AG04449 (cell line): ENCODE measurements at regions of chr3 and their contacts with region 1.

Region 1: DNA sequence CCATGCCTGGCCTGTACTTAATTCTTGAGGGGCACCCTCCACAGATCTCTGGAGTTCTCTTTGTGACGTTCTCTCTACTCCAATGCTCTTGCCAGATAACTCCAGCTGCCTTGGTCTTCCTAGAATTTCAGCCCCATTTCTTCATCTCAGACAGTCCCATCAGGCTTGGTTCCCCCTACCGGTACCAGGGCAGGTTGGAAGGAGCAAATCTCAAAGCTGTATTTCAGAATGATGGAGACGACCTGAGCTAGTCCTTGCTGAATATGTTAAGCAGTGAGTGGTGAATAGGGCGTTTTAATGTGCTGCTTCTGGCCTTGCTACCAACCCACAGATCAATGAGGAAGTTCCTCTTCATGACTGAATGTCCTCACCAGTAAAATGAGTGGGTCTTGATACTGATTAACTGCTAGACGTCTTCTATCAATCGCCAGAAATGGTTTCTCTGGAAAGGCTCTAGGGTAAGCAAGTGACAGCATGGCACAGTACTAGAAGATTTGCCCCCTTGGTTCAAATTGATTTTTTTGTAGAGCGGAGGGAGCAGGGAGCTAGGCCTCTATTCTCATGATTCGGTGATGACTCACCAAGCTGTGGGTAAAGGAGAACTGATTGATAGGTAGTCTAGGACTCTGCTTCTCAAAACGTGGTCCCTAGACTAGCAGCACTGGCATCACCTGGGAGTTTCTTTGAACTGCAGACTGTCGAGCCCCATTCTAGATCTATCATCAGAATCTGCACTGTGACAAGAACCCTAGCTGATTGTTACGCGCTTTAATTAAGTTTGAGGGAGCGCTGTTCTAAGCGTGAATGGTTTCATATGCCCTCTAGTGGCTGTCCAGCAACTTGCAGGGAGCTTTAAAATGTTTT is 67.8 kb downstream of the UBP1 start:
- DNase-seq: no peak
- H3K4me3 ChIP-seq: no peak overlapping the region
- CTCF ChIP-seq: peak; percentile 79

Region 2: GRCh38 chr3:33105341-33105948 is 267.0 kb before region 1 on chr3:
- CTCF ChIA-PET with region 1: interaction called, 10 read pairs
- POLR2A ChIA-PET with region 1: no interaction called
- DNase-seq: no peak
- H3K4me3 ChIP-seq: no peak overlapping the region
- CTCF ChIP-seq: no peak

Region 3: GRCh38 chr3:33131331-33132018 is 241.0 kb before region 1 on chr3:
- CTCF ChIA-PET with region 1: interaction called, 425 read pairs
- POLR2A ChIA-PET with region 1: interaction called, 3 read pairs
- DNase-seq: no peak
- H3K4me3 ChIP-seq: no peak overlapping the region
- CTCF ChIP-seq: peak; percentile 36

Region 4: GRCh38 chr3:33209357-33209756 is 163.1 kb before region 1 on chr3:
- CTCF ChIA-PET with region 1: no interaction called
- POLR2A ChIA-PET with region 1: no interaction called
- DNase-seq: no peak
- H3K4me3 ChIP-seq: no peak overlapping the region
- CTCF ChIP-seq: no peak

Region 5: GRCh38 chr3:33231756-33232465 is 140.5 kb before region 1 on chr3:
- CTCF ChIA-PET with region 1: no interaction called
- POLR2A ChIA-PET with region 1: no interaction called
- DNase-seq: no peak
- H3K4me3 ChIP-seq: no peak overlapping the region
- CTCF ChIP-seq: no peak

Region 6: GRCh38 chr3:33360136-33360825 is 12.2 kb before region 1 on chr3:
- CTCF ChIA-PET with region 1: interaction called, 58 read pairs
- POLR2A ChIA-PET with region 1: interaction called, 3 read pairs
- DNase-seq: peak; percentile 29
- H3K4me3 ChIP-seq: no peak overlapping the region
- CTCF ChIP-seq: no peak

Region 7: DNA sequence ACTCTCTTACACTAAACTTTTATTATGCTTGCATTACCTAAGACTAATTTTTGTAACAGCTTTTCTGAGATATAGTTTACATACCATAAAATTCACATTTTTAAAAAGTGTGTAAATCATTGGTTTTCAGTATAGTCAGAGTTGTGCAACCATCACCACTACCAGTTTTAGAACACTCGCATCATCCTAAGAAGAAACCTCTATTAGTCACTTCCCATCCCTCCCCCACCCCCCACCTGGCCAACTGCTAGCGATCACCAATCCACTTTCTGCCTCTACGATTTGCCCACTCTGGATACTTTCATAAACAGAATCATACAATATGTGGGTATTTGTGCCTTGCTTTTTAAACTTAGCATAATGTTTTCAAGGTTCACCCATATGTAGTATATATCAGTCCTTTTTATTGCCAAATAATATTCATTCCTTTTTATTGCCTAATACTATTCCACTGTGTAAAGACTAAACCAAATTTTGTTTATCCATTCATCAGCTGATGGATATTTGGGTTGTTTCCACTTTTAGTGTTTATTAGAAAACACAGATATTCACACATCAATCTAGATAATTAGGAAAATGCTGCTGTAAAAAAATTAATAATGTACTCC is 44.7 kb after region 1 on chr3:
- CTCF ChIA-PET with region 1: interaction called, 10 read pairs
- POLR2A ChIA-PET with region 1: no interaction called
- DNase-seq: no peak
- H3K4me3 ChIP-seq: no peak overlapping the region
- CTCF ChIP-seq: no peak

Region 8: GRCh38 chr3:33681667-33682066 is 309.2 kb after region 1 on chr3:
- CTCF ChIA-PET with region 1: no interaction called
- POLR2A ChIA-PET with region 1: no interaction called
- DNase-seq: no peak
- H3K4me3 ChIP-seq: no peak overlapping the region
- CTCF ChIP-seq: no peak